ENCODE measurements at regions of chr11 and their contacts with region 1.

Region 1: GRCh38 chr11:36306888-36307287 is 10.8 kb downstream of the PRR5L start:
- DNase-seq: no peak
- H3K4me3 ChIP-seq: no peak overlapping the region
- H3K27ac ChIP-seq: no peak overlapping the region
- H3K4me1 ChIP-seq: no peaks in the 10 kb centered on the region
- H3K27me3 ChIP-seq: no peaks in the 10 kb centered on the region
- CTCF ChIP-seq: peak; percentile 21

Region 2: GRCh38 chr11:36478700-36479329 is 171.9 kb after region 1 on chr11:
- intact Hi-C with region 1: loop called (anchors 5 kb)
- DNase-seq: no peak
- H3K4me3 ChIP-seq: no peak overlapping the region
- H3K27ac ChIP-seq: no peak overlapping the region
- H3K4me1 ChIP-seq: no peaks in the 10 kb centered on the region
- H3K27me3 ChIP-seq: no peaks in the 10 kb centered on the region
- CTCF ChIP-seq: peak; percentile 37 to 57

Region 3: GRCh38 chr11:37061411-37061810 is 754.5 kb after region 1 on chr11:
- intact Hi-C with region 1: no loop called
- DNase-seq: no peak
- H3K4me3 ChIP-seq: no peak overlapping the region
- H3K27ac ChIP-seq: no peak overlapping the region
- H3K4me1 ChIP-seq: no peaks in the 10 kb centered on the region
- H3K27me3 ChIP-seq: no peaks in the 10 kb centered on the region
- CTCF ChIP-seq: no peak

Measured in tibial artery (tissue), 4 donors.